ENCODE measurements at regions of chr1 and their contacts with region 1.

Region 1: DNA sequence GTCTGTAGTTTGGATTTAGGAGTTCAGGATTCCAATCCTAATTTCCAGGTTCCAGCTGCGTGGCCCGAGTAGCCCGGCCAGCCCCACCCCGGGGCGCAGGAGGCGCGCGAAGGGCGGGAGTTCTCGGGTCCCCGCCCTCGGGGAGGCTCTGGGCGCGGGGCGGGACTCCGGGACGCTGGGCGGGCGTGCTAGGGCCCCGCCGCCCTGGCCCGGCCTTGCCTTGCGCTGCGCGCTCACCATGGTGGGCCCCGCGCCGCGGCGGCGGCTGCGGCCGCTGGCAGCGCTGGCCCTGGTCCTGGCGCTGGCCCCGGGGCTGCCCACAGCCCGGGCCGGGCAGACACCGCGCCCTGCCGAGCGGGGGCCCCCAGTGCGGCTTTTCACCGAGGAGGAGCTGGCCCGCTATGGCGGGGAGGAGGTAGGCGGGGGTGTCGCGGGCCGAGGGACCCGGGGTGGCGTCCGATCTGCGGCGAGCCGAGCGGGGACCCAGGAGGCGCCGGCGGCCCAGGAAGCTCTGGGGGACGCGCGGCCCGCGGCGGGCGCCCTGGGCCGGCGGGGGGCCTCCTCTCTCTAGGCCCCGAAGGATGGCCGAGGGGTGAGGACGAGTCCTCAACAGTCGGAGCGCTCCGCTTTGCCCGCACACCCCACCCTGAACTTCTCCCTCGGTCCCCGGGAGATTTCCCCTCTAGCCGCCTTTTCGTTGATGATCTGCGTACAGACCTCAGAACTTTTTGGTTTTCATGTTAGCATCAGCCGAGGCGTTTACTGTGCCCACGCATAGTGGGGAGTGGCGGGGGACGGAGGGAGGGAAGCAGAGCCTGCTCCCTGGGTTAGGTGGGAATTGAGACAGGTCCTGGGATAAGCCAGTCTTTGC is at the start of gene NENF:
- DNase-seq: peak; percentile 93
- ATAC-seq: peak; percentile 100
- total RNA-seq, gene NENF: 119 TPM

Region 2: GRCh38 chr1:212375986-212376385 is 57.0 kb before region 1 on chr1:
- intact Hi-C with region 1: loop called (anchors 10 kb)
- DNase-seq: no peak
- ATAC-seq: no peak

Region 3: DNA sequence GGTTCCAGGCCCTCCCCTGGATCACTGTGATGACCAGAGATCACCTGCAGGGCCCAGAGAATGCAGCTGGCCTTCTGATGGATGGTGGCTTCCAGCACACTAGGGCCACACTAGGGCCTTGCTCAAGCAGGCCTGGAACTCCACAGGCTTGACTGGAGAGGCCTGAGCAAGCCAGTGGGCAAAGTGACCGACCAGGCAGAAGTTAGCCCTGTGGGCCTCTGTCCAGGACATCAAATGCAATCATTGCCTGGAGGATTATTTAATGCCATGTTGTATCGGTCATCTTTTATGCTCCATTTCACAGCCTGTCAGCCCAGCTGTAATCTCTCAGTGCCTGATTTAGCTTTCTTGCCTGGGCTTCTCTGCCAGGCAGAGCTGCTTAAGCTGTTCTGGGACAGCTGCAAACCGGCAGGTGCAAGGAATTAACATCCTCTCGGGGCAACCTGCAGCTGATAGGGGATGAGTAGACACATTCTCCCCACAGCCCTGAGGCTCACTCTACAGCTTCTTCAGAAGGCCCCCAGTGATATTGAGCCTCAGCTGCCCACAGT is 17.5 kb after region 1 on chr1:
- intact Hi-C with region 1: loop called (anchors 2 kb)
- DNase-seq: no peak
- ATAC-seq: peak; percentile 31

Measured in Right ventricle myocardium inferior (tissue), 1 donor.